CD8-positive, alpha-beta T cell (primary cell): ENCODE measurements at regions of chr6 and their contacts with region 1.

Region 1: DNA sequence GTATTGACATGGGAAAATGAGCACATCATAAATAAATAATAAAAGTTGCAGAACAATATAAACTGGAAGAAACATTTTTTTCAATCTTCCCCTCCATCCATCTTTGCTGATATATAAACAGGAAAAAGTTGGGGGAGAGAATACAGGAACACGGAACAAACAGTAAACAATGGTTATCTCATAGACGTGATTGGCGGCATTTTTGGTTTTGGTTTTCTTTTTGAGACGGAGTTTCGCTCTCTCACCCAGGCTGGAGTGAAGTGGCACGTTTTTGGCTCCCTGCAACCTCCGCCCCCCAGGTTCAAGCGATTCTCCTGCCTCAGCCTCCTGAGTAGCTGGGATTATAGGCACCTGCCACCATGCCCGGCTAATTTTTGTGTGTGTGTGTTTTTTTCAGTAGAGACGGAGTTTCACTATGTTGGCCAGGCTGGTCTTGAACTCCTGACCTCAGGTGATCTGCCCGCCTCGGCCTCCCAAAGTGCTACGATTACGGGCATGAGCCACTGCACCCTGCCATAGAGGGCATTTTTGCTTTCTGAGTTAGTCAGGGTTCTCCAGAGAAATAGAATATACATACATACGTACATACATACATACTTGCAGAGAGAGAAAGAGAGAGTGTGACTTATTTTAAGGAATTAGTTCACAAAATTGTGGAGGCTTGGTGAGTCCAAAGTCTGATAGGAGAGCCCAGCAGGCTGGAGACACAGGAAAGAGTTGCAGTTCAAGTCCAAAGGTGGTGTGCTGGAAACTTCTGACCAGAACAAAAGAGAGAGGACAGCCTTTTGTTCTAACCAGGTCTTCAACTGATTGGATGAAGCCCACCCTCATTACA is 22.6 kb downstream of the GNL1 start:
- DNase-seq: peak in 2 of 9 experiments; percentile 50 to 71
- ATAC-seq: no peak
- H3K4me3 ChIP-seq: peak overlapping the region in 1 of 2 experiments; percentile 28
- H3K4me3 Mint-ChIP-seq: peak overlapping the region; percentile 65
- H3K27ac ChIP-seq: peak overlapping the region in 1 of 2 experiments; percentile 44
- H3K27ac Mint-ChIP-seq: peak overlapping the region; percentile 57
- H3K4me1 ChIP-seq: peaks cover 15% of the 10 kb centered on the region
- H3K4me1 Mint-ChIP-seq: peaks cover 33% of the 10 kb centered on the region
- H3K27me3 ChIP-seq: no peaks in the 10 kb centered on the region
- H3K27me3 Mint-ChIP-seq: no peaks in the 10 kb centered on the region
- CTCF ChIP-seq: no peak

Region 2: GRCh38 chr6:28802417-28803336 is 1731.0 kb before region 1 on chr6:
- CTCF ChIA-PET with region 1: no interaction called
- POLR2A ChIA-PET with region 1: no interaction called
- intact Hi-C with region 1: no loop called
- DNase-seq: no peak
- ATAC-seq: no peak
- H3K4me3 ChIP-seq: no peak overlapping the region
- H3K4me3 Mint-ChIP-seq: no peak overlapping the region
- H3K27ac ChIP-seq: no peak overlapping the region
- H3K27ac Mint-ChIP-seq: no peak overlapping the region
- H3K4me1 ChIP-seq: no peaks in the 10 kb centered on the region
- H3K4me1 Mint-ChIP-seq: no peaks in the 10 kb centered on the region
- H3K27me3 ChIP-seq: peaks cover 24 to 36% of the 10 kb centered on the region in 2 experiments
- H3K27me3 Mint-ChIP-seq: peaks cover 74% of the 10 kb centered on the region
- CTCF ChIP-seq: no peak

Region 3: GRCh38 chr6:30378290-30378937 is 155.3 kb before region 1 on chr6:
- CTCF ChIA-PET with region 1: no interaction called
- POLR2A ChIA-PET with region 1: no interaction called
- intact Hi-C with region 1: no loop called
- DNase-seq: no peak
- ATAC-seq: no peak
- H3K4me3 ChIP-seq: no peak overlapping the region
- H3K4me3 Mint-ChIP-seq: no peak overlapping the region
- H3K27ac ChIP-seq: no peak overlapping the region
- H3K27ac Mint-ChIP-seq: no peak overlapping the region
- H3K4me1 ChIP-seq: no peaks in the 10 kb centered on the region
- H3K4me1 Mint-ChIP-seq: peaks cover 2% of the 10 kb centered on the region
- H3K27me3 ChIP-seq: no peaks in the 10 kb centered on the region
- H3K27me3 Mint-ChIP-seq: peaks cover 32% of the 10 kb centered on the region
- CTCF ChIP-seq: no peak

Region 4: DNA sequence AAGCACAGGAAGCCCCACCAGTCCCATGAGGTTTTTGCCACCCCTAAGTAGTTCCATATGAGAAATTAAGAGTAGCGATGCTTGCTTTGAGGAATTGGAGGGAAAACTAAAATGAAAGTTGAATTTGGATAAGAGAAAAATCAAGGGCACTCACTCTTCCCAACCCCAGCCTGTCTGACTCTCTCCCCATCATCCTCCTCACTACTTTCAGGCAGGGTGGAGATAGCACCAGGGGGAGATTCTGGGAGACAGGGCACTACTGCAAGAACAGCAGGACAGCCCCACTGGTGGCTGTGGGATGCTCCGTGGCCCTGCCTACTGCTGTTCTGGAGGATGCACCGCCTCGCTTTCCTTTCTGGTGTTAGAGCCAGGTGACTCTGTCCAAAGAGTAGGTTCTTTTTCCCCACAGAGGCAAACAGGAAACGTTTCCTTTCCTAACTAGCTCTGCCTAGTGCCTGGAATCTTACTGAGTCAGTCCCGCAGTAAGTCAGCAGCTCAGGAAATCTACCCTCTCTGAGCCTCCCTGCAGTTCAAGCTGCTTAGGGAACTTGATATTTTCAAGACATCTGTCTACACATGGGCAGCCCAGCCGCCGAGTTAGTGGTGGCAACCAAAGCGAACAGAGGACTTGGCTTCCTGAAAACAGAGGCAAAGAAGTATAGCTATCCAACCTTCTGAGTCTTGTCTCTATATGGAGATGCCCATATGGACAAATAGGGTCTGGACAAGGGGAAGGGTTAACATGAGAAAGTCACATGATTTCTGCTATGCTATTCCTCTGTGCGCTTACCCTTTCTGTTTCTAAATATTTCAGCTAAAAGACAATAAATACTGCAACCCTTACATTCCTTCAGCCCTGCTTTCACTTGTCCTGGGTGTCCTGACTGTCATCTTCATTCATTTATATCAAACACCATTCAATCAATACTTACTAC is 33.0 kb before region 1 on chr6:
- CTCF ChIA-PET with region 1: interaction called, 13 read pairs
- POLR2A ChIA-PET with region 1: interaction called, 168 read pairs
- intact Hi-C with region 1: no loop called
- DNase-seq: peak in 1 of 9 experiments; percentile 30
- ATAC-seq: peak; percentile 55
- H3K4me3 ChIP-seq: peak overlapping the region; percentile 14 to 38
- H3K4me3 Mint-ChIP-seq: peak overlapping the region; percentile 80
- H3K27ac ChIP-seq: no peak overlapping the region
- H3K27ac Mint-ChIP-seq: peak overlapping the region; percentile 83
- H3K4me1 ChIP-seq: peaks cover 38% of the 10 kb centered on the region
- H3K4me1 Mint-ChIP-seq: peaks cover 42% of the 10 kb centered on the region
- H3K27me3 ChIP-seq: no peaks in the 10 kb centered on the region
- H3K27me3 Mint-ChIP-seq: no peaks in the 10 kb centered on the region
- CTCF ChIP-seq: no peak

Region 5: DNA sequence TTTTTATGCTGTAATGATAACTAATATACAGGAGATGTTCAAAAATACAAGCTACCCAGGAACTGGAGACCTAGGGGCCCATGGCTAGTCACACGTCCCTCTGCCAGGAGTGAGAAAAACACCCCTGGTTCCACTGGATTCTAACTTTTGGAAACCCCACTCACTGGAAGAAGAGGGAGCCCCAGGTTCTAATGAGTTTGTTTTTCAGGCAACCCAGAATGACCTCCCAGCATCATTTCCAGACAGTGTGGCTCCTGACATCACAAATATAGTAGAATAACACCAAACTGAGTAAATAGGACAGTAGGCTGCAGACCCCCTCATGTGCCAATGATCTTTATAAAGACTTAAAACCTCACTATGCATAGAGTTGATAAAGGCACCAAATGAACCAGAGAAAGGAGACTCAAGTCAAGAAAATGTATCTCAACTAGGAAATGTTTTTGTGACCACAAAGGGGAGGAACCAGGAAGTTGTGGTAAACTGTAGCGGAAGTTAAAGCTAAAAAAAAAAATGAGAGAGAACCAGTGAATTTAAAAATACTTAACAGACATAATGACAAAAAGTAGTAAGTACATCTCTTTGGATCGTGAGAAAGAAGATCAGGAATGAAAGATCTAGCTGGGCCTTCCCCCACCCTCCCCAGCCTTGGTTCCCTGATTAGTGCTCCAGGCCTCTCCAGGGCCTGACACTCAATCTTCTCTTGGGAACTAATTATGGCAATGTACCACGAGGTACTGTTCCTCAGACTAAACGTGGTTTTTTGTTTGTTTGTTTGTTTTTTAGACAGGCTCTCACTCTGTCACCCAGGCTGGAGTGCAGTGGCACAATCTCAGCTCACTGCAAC is 24.6 kb before region 1 on chr6:
- CTCF ChIA-PET with region 1: interaction called, 25 read pairs
- POLR2A ChIA-PET with region 1: interaction called, 6 read pairs
- intact Hi-C with region 1: no loop called
- DNase-seq: peak in 3 of 9 experiments; percentile 43 to 88 (median 78)
- ATAC-seq: peak; percentile 81
- H3K4me3 ChIP-seq: peak overlapping the region; percentile 24 to 31
- H3K4me3 Mint-ChIP-seq: peak overlapping the region; percentile 62
- H3K27ac ChIP-seq: peak overlapping the region in 1 of 2 experiments; percentile 85
- H3K27ac Mint-ChIP-seq: peak overlapping the region; percentile 82
- H3K4me1 ChIP-seq: peaks cover 68% of the 10 kb centered on the region
- H3K4me1 Mint-ChIP-seq: peaks cover 62% of the 10 kb centered on the region
- H3K27me3 ChIP-seq: no peaks in the 10 kb centered on the region
- H3K27me3 Mint-ChIP-seq: no peaks in the 10 kb centered on the region
- CTCF ChIP-seq: no peak

Region 6: DNA sequence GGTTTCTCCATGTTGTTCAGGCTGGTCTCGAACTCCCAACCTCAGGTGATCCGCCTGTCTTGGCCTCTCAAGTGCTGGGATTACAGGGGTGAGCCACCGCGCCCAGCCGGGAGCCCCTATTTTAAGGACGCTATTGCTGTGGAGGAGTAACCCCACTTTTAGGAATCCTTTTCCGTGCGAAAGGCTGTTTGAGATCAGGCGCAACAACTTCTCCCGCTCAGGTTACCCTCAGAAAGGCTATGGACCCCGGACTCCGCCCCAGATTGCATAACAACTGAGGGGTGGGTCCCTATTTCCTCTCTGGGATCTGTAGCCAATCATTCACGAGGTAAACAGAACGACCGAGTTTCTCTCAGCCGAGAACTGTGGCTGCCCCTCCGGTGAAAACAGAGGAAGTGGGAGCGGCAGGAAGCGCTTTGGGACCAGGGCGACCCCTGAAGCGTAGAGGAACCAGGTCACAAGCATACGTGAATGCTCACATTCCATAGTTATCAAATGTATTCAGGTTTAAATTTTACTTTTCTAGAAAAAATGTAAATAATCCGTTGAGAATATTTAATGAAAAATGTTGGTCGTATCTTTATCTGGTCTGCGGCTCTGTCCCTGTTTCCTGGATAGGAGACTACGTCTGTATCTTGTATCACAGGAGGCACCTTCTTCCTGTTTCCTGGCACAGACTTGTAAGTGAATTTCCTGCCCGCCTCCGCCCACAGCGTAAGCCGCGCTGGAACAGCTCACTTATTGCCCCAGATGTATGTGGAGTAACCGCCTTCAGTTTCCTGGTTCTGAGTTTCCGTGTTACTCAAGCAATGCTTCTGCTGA is 17.5 kb before region 1 on chr6:
- CTCF ChIA-PET with region 1: interaction called, 219 read pairs
- POLR2A ChIA-PET with region 1: interaction called, 20 read pairs
- intact Hi-C with region 1: loop called (anchors 1 to 2 kb)
- DNase-seq: peak; percentile 77 to 98 (median 90)
- ATAC-seq: peak; percentile 83
- H3K4me3 ChIP-seq: peak overlapping the region; percentile 36 to 43
- H3K4me3 Mint-ChIP-seq: peak overlapping the region; percentile 83
- H3K27ac ChIP-seq: peak overlapping the region; percentile 82 to 99
- H3K27ac Mint-ChIP-seq: peak overlapping the region; percentile 99
- H3K4me1 ChIP-seq: peaks cover 61% of the 10 kb centered on the region
- H3K4me1 Mint-ChIP-seq: peaks cover 63% of the 10 kb centered on the region
- H3K27me3 ChIP-seq: no peaks in the 10 kb centered on the region
- H3K27me3 Mint-ChIP-seq: no peaks in the 10 kb centered on the region
- CTCF ChIP-seq: no peak